Ascending aorta (tissue), 2 donors: ENCODE measurements at regions of chr7 and their contacts with region 1.

Region 1: GRCh38 chr7:116588641-116589594 is 64.1 kb downstream of the CAV1 start:
- DNase-seq: no peak
- H3K4me3 ChIP-seq: no peak overlapping the region
- H3K27ac ChIP-seq: peak overlapping the region; percentile 5 to 52
- H3K4me1 ChIP-seq: peaks cover 0 to 14% of the 10 kb centered on the region in 2 donors
- H3K27me3 ChIP-seq: no peaks in the 10 kb centered on the region
- CTCF ChIP-seq: peak; percentile 51 to 78 (median 64)

Region 2: GRCh38 chr7:116173051-116174028 is 415.6 kb before region 1 on chr7:
- intact Hi-C with region 1: loop called (anchors 2 kb)
- DNase-seq: no peak
- H3K4me3 ChIP-seq: no peak overlapping the region
- H3K27ac ChIP-seq: no peak overlapping the region
- H3K4me1 ChIP-seq: peaks cover 0 to 4% of the 10 kb centered on the region in 2 donors
- H3K27me3 ChIP-seq: no peaks in the 10 kb centered on the region
- CTCF ChIP-seq: peak; percentile 26 to 59 (median 56)

Region 3: GRCh38 chr7:116258734-116259133 is 330.2 kb before region 1 on chr7:
- intact Hi-C with region 1: loop called (anchors 1 kb)
- DNase-seq: no peak
- H3K4me3 ChIP-seq: no peak overlapping the region
- H3K27ac ChIP-seq: peak overlapping the region; percentile 0 to 46
- H3K4me1 ChIP-seq: peaks cover 0 to 6% of the 10 kb centered on the region in 2 donors
- H3K27me3 ChIP-seq: no peaks in the 10 kb centered on the region
- CTCF ChIP-seq: peak; percentile 64 to 77 (median 75)

Region 4: DNA sequence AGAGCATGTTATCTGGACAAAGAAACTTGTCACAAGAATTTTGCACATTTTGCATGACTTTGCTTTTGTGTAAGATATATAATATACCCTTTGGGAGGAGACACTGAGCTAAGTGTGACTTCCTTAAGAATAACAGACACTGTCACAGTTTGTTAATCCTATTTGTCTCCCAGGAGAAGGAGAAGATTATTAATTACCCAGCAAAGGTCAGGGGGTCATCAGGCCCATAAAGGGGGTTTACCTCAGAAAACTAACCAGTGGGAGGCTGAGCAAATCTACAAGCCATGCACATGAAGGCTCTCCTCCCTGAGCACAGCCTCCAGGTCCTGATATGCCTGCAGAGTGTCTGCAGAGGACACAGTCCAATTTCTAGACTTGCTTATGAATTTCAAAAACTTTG is 72.9 kb after region 1 on chr7:
- intact Hi-C with region 1: no loop called
- DNase-seq: no peak
- H3K4me3 ChIP-seq: no peak overlapping the region
- H3K27ac ChIP-seq: no peak overlapping the region
- H3K4me1 ChIP-seq: no peaks in the 10 kb centered on the region
- H3K27me3 ChIP-seq: no peaks in the 10 kb centered on the region
- CTCF ChIP-seq: no peak

Region 5: GRCh38 chr7:116671681-116672595 is 83.0 kb after region 1 on chr7 and contains the start of gene MET:
- intact Hi-C with region 1: loop called (anchors 5 kb)
- DNase-seq: peak; percentile 39 to 85
- H3K4me3 ChIP-seq: peak within 1 kb of the TSS; percentile 64 to 91
- H3K27ac ChIP-seq: peak within 1 kb of the TSS; percentile 62 to 79
- H3K4me1 ChIP-seq: peaks cover 0 to 3% of the 10 kb centered on the region in 2 donors
- H3K27me3 ChIP-seq: no peaks in the 10 kb centered on the region
- CTCF ChIP-seq: peak; percentile 54 to 60 (median 58)
- total RNA-seq, gene MET: 29.5 TPM

Region 6: DNA sequence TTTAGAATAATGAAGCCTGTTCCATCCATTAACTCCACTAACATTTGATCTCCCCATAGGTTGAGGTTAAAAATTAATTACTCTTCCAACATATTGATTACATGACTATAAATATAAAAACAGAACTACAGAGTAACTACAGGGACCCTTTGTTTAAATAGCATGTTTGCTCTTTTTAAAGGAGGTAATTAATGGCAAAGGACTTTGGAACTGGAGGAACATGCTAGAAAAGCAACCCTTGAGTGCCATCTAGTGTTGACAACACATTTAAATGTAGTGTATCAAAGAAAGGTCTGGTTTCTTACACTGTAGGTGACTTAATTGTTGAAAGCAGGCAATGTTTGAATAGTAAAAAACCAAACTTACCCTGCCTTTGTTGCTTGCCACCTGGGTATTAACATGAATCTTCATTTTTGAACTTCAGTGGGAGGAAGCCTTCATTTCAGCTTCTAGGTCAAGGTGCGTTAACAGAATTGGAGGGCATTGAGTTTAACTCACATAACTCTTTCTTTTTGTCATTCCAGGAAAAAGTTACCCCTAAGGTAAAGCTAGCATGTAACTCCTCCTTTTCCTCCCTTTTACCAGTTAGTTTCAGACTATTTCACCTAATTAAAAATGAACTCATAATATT is 220.8 kb after region 1 on chr7:
- intact Hi-C with region 1: loop called (anchors 1 kb)
- DNase-seq: no peak
- H3K4me3 ChIP-seq: no peak overlapping the region
- H3K27ac ChIP-seq: peak overlapping the region in 1 of 2 donors; percentile 3
- H3K4me1 ChIP-seq: peaks cover 0 to 5% of the 10 kb centered on the region in 2 donors
- H3K27me3 ChIP-seq: no peaks in the 10 kb centered on the region
- CTCF ChIP-seq: peak; percentile 65 to 77 (median 65)